Activated CD4-positive, alpha-beta memory T cell treated with anti-CD3 and anti-CD28 coated beads, Interleukin-2, amount 10 ng/mL, durations not matched to agents 7 days and 5 days (primary cell): ENCODE measurements at regions of chr9 and their contacts with region 1.

Region 1: DNA sequence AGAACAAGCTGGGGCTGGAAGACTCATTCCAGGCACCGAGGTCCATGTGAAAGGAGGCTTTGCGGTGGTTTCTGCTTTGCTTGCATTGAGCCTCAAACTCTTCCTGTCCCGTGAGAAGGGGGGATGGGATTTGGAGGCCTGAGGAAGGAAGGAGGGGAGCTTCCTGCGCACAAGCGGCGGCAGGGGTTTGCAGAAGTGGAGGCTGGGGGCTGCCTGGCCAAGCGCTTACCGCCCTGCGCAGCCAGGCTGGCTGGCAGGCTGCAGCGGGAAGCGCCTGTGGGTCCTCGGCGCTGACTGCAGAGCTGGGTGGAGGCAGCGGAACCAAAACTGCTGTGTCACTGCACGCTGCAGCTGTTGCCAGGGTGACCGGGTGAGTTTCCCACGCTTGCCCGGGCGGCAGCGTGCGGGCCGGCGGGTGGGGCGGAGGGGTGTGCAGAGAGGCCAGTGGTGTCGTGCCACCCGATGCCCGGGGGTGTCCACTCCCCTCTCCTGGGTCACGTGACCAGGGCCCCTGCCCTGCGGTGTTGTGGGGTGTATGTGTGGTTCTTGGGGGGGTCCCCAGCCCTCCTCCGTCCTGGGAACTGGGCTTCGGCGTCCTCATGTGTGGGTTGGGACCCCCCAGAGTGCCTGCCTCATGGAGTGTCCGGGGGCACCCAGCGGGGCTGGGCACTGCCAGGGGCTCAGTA is 81.0 kb downstream of the RXRA start:
- DNase-seq: peak; percentile 88
- H3K4me3 Mint-ChIP-seq: peak overlapping the region; percentile 60
- H3K27ac Mint-ChIP-seq: peak overlapping the region; percentile 71
- H3K4me1 Mint-ChIP-seq: peaks cover 47% of the 10 kb centered on the region
- H3K27me3 Mint-ChIP-seq: peaks cover 3% of the 10 kb centered on the region

Region 2: DNA sequence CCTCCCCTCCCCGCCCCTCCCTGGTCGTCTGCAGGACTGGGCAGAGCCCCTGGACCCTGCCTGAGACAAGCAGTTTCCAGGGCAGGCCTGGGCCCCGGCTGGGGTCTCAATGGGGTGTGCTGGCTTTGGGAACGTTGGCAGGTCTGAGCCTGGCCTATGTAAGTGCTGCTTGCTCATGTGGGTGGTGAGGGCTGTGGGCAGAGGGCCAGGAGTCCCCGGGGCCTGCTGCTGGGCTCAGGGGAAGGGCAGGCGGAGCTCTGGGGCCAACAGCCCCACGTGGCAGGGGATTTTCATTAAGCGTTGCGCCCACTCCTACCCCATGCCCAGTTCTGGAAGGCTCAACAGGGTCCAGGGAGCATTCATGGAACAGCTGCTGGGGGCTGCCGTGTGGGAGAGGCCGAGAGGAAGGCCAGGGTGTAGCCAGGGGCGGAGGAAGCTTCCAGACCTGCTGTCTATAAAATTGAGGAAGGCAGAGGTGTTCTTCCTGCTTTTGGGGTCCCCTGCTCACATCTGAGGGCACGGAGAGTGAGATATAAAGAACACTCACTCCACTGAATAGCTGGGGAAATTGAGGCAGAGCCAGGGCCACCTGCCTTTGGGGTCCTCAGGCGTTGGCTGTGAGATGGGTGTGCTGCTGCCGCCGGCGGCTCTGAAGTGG is 48.5 kb before region 1 on chr9:
- CTCF ChIA-PET with region 1: no interaction called
- POLR2A ChIA-PET with region 1: no interaction called
- DNase-seq: no peak
- H3K4me3 Mint-ChIP-seq: no peak overlapping the region
- H3K27ac Mint-ChIP-seq: no peak overlapping the region
- H3K4me1 Mint-ChIP-seq: no peaks in the 10 kb centered on the region
- H3K27me3 Mint-ChIP-seq: no peaks in the 10 kb centered on the region

Region 3: GRCh38 chr9:134391314-134392231 is 15.7 kb before region 1 on chr9:
- CTCF ChIA-PET with region 1: interaction called, 3 read pairs
- POLR2A ChIA-PET with region 1: interaction called, 30 read pairs
- DNase-seq: peak; percentile 83
- H3K4me3 Mint-ChIP-seq: peak overlapping the region; percentile 78
- H3K27ac Mint-ChIP-seq: peak overlapping the region; percentile 86
- H3K4me1 Mint-ChIP-seq: peaks cover 73% of the 10 kb centered on the region
- H3K27me3 Mint-ChIP-seq: peaks cover 7% of the 10 kb centered on the region